SK-N-SH (cell line): ENCODE measurements at regions of chrX and their contacts with region 1.

Region 1: DNA sequence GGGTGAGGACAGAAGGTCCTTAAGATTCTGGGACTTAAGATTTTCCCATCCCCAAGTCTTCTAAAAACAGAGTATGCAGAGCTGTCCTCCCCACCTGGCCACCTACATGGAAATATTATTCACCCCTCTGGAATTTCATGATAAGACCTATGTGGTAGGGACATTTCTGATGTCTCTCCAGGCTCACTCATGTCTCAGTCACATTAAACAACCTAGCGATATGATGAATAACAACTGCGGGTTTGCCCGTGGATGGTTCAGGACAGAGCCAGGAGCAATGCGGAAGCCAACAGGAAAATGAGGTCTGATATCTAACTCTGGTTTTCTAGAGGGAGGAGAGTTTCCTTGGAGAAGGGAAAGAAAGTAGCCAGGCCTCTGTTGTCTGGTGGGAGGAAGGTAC is 47.4 kb downstream of the TEX13A start:
- DNase-seq: no peak
- H3K4me3 ChIP-seq: no peak overlapping the region
- H3K27ac ChIP-seq: no peak overlapping the region
- H3K4me1 ChIP-seq: no peaks in the 10 kb centered on the region
- H3K27me3 ChIP-seq: no peaks in the 10 kb centered on the region; the same call in 1 of the 2 replicates
- CTCF ChIP-seq: no peak
- EP300 ChIP-seq: no peak
- RAD21 ChIP-seq: no peak

Region 2: GRCh38 chrX:105190252-105190853 is 17.3 kb after region 1 on chrX:
- CTCF ChIA-PET with region 1: interaction called, 14 read pairs
- POLR2A ChIA-PET with region 1: no interaction called
- DNase-seq: peak; percentile 7
- H3K4me3 ChIP-seq: no peak overlapping the region; a peak in 1 of 4 replicates
- H3K27ac ChIP-seq: no peak overlapping the region
- H3K4me1 ChIP-seq: no peaks in the 10 kb centered on the region
- H3K27me3 ChIP-seq: 0 out of 2 replicates have a peak, but pooled peaks cover 8% of the 10 kb centered on the region
- CTCF ChIP-seq: peak; percentile 92
- EP300 ChIP-seq: no peak
- RAD21 ChIP-seq: peak; percentile 49; the same call in 1 of the 2 replicates